Dendritic cell treated with granulocyte-macrophage colony-stimulating factor and Interleukin-4, amounts not matched to agents 40 ng/mL and 50 ng/mL, for 4 days (primary cell): ENCODE measurements at regions of chr3 and their contacts with region 1.

Region 1: GRCh38 chr3:131907796-131908195 is 127.0 kb downstream of the CPNE4 start:
- H3K4me3 Mint-ChIP-seq: no peak overlapping the region
- H3K27ac Mint-ChIP-seq: no peak overlapping the region
- H3K4me1 Mint-ChIP-seq: no peaks in the 10 kb centered on the region
- H3K27me3 Mint-ChIP-seq: peaks cover 2% of the 10 kb centered on the region

Region 2: DNA sequence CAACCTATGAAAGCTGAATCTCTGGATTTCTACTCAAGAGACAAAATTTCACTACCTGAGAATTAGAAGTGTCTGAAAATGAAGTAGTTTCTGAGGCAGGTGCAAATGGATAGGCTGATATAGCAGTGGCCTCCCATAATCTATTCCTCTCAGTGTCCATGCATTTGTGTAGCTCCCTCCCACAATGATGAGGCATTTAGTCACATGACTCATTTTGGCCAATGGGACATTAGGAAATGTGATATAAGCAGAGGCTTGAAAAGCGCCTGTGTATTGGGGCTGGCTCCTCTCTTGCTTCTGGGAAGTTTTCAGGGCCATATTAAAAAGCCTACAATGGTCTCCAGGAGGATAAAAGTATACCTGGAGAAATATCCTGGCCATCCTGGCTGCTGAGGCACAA is 325.4 kb before region 1 on chr3:
- intact Hi-C with region 1: no loop called
- H3K4me3 Mint-ChIP-seq: no peak overlapping the region
- H3K27ac Mint-ChIP-seq: no peak overlapping the region
- H3K4me1 Mint-ChIP-seq: no peaks in the 10 kb centered on the region
- H3K27me3 Mint-ChIP-seq: no peaks in the 10 kb centered on the region

Region 3: GRCh38 chr3:131880948-131881347 is 26.8 kb before region 1 on chr3:
- intact Hi-C with region 1: loop called (anchors 1 kb)
- H3K4me3 Mint-ChIP-seq: no peak overlapping the region
- H3K27ac Mint-ChIP-seq: no peak overlapping the region
- H3K4me1 Mint-ChIP-seq: no peaks in the 10 kb centered on the region
- H3K27me3 Mint-ChIP-seq: peaks cover 2% of the 10 kb centered on the region